Calu3 (cell line): ENCODE measurements at regions of chr22 and their contacts with region 1.

Region 1: GRCh38 chr22:35761037-35761436 is 43.4 kb downstream of the APOL5 start:
- DNase-seq: peak; percentile 6
- H3K4me3 Mint-ChIP-seq: no peak overlapping the region
- H3K27ac Mint-ChIP-seq: no peak overlapping the region
- H3K4me1 Mint-ChIP-seq: no peaks in the 10 kb centered on the region
- H3K27me3 Mint-ChIP-seq: no peaks in the 10 kb centered on the region
- CTCF ChIP-seq: no peak

Region 2: GRCh38 chr22:35728639-35729308 is 32.3 kb before region 1 on chr22:
- CTCF ChIA-PET with region 1: no interaction called
- intact Hi-C with region 1: loop called (anchors 1 kb)
- DNase-seq: peak; percentile 83
- H3K4me3 Mint-ChIP-seq: no peak overlapping the region
- H3K27ac Mint-ChIP-seq: no peak overlapping the region
- H3K4me1 Mint-ChIP-seq: peaks cover 15% of the 10 kb centered on the region
- H3K27me3 Mint-ChIP-seq: peaks cover 35% of the 10 kb centered on the region
- CTCF ChIP-seq: no peak

Region 3: DNA sequence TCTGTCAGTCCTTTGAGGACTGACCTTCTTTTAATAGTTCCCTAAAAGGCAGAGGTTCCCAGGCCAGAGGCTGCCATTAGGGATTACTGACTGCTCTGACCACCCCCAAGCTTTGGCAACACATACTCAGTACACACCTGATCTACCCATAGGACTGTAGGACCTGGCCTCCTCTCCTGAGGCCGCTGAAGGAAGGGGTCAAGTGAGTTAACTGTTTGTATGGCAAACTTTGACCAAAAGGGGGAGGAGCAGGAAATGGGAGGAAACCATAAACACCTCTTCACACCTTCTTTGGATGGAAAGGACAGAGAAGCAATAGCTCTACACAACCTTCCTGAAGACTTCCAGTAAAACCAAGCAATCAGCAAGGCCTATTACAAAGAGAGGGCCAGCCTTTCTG is 60.6 kb after region 1 on chr22:
- CTCF ChIA-PET with region 1: no interaction called
- intact Hi-C with region 1: no loop called
- DNase-seq: no peak
- H3K4me3 Mint-ChIP-seq: no peak overlapping the region
- H3K27ac Mint-ChIP-seq: no peak overlapping the region
- H3K4me1 Mint-ChIP-seq: peaks cover 29% of the 10 kb centered on the region
- H3K27me3 Mint-ChIP-seq: no peaks in the 10 kb centered on the region
- CTCF ChIP-seq: no peak

Region 4: DNA sequence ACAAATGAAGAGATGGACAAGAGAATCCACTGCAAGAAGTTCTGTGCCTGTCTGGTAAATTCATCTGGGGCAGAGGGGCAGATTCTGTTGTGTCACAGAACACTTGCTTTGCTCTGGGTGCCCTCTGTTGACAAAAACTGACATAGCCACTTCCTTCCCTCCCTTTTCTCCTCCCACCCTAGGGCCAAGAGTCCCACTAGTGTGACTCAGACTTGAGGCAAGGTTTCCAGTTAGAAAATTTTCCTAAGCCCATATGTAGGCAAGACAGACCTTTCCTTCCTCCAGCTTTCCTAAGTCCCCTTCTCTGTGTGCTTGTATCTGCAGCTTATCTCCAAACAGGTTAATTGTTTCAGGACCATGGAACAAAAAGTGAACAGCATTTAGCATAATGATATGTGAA is 160.7 kb after region 1 on chr22:
- CTCF ChIA-PET with region 1: no interaction called
- intact Hi-C with region 1: loop called (anchors 5 kb)
- DNase-seq: peak; percentile 79
- H3K4me3 Mint-ChIP-seq: no peak overlapping the region
- H3K27ac Mint-ChIP-seq: no peak overlapping the region
- H3K4me1 Mint-ChIP-seq: peaks cover 10% of the 10 kb centered on the region
- H3K27me3 Mint-ChIP-seq: no peaks in the 10 kb centered on the region
- CTCF ChIP-seq: peak; percentile 42